Aorta (tissue), 5 donors: ENCODE measurements at regions of chr16 and their contacts with region 1.

Region 1: DNA sequence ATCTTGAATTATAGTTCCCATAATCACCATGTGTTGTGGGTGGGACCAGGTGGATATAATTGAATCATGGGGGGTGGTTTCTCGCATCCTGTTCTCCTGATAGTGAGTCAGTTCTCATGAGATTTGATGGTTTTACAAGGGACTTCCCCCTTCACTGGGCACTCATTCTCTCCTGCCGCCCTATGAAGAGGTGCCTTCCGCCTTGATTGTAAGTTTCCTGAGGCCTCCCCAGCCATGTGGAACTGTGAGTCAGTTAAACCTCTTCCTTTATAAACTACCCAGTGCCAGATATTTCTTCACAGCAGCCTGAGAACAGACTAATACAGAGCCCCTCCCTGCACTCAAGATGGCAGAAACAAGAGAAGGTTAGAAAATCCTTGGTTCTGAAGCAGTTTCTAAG is 26.4 kb downstream of the LDAF1 start:
- DNase-seq: no peak
- ATAC-seq: no peak
- H3K4me3 ChIP-seq: no peak overlapping the region
- H3K27ac ChIP-seq: no peak overlapping the region
- H3K4me1 ChIP-seq: peaks cover 0 to 1% of the 10 kb centered on the region in 2 donors
- H3K27me3 ChIP-seq: no peaks in the 10 kb centered on the region

Region 2: DNA sequence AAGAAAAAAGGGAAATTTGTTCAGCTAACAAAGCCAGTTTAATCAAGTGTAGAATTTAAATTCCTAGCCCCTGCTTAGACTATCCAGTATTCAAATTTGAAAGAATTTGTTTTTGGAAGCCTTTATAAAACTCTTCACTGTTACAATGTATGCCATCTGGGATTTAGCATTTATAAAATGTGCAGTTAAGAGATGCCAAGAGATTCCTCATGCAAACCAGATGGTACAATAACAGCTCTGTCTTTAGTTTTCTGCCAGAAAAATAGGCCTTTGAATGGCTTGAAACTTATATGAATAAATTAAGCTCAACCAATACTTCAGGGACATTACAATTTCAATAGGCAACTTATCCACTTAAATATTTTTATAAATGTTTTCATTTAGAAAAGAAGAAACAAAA is 41.9 kb after region 1 on chr16:
- intact Hi-C with region 1: no loop called
- DNase-seq: no peak
- ATAC-seq: no peak
- H3K4me3 ChIP-seq: no peak overlapping the region
- H3K27ac ChIP-seq: no peak overlapping the region
- H3K4me1 ChIP-seq: no peaks in the 10 kb centered on the region
- H3K27me3 ChIP-seq: no peaks in the 10 kb centered on the region

Region 3: GRCh38 chr16:22321339-22322001 is 1136.6 kb after region 1 on chr16:
- intact Hi-C with region 1: loop called in 1 of 2 experiments (anchors 10 kb)
- DNase-seq: peak in 1 of 2 donors; percentile 85
- ATAC-seq: peak; percentile 75
- H3K4me3 ChIP-seq: no peak overlapping the region
- H3K27ac ChIP-seq: no peak overlapping the region
- H3K4me1 ChIP-seq: no peaks in the 10 kb centered on the region
- H3K27me3 ChIP-seq: no peaks in the 10 kb centered on the region